ENCODE measurements at regions of chr22 and their contacts with region 1.

Region 1: GRCh38 chr22:22422629-22423112 is 85.9 kb downstream of the ZNF280B start:
- DNase-seq: peak; percentile 58
- H3K4me3 ChIP-seq: no peak overlapping the region
- H3K27ac ChIP-seq: no peak overlapping the region
- H3K4me1 ChIP-seq: no peaks in the 10 kb centered on the region
- H3K27me3 ChIP-seq: peaks cover 8 to 15% of the 10 kb centered on the region in 2 experiments
- CTCF ChIP-seq: peak; percentile 82
- POLR2A ChIP-seq: no peak

Region 2: GRCh38 chr22:22207845-22208564 is 214.7 kb before region 1 on chr22:
- CTCF ChIA-PET with region 1: interaction called, 13 read pairs
- POLR2A ChIA-PET with region 1: no interaction called
- dilution Hi-C with region 1: no loop called
- intact Hi-C with region 1: loop called (anchors 5 kb)
- DNase-seq: peak; percentile 68
- H3K4me3 ChIP-seq: no peak overlapping the region
- H3K27ac ChIP-seq: no peak overlapping the region
- H3K4me1 ChIP-seq: peaks cover 11% of the 10 kb centered on the region
- H3K27me3 ChIP-seq: peaks cover 6 to 22% of the 10 kb centered on the region in 2 experiments
- CTCF ChIP-seq: peak; percentile 79 to 80
- POLR2A ChIP-seq: no peak

Region 3: DNA sequence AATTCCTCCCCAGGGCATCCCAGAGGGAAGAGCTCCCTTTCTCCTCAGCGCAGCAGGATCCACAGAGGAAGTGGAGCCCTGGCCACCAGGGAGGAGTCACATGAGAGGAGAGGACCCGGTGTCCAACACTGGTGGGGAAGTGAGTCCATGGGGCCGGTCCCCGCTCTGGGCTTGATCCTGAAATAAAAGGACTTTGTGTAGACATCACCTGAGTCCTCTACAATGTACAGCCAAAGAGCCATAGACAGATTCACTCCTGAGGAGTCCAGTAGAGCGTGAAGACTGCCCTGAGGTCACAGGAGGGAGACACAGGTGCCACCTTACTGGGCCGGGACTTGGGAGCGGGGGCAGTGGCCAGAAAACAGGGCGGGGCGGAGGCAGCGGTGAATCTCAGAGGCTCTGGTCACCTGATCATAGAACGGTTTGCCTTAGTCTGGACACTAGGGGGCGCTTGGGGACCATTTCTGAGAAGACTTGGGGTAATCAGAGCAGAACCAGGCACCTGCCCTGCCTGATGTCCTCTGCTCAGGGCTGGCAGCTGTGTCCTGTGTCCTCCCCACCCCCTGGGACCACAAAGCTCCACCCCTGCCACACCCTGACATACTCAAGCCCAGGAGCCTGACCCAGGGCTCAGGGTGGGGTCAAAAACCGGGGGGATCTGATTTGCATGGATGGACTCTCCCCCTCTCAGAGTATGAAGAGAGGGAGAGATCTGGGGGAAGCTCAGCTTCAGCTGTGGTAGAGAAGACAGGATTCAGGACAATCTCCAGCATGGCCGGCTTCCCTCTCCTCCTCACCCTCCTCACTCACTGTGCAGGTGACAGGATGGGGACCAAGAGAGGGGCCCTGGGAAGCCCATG is 65.4 kb before region 1 on chr22:
- CTCF ChIA-PET with region 1: no interaction called
- POLR2A ChIA-PET with region 1: no interaction called
- dilution Hi-C with region 1: no loop called
- intact Hi-C with region 1: no loop called
- DNase-seq: peak; percentile 50
- H3K4me3 ChIP-seq: no peak overlapping the region
- H3K27ac ChIP-seq: no peak overlapping the region
- H3K4me1 ChIP-seq: no peaks in the 10 kb centered on the region
- H3K27me3 ChIP-seq: peaks cover 3 to 6% of the 10 kb centered on the region in 2 experiments
- CTCF ChIP-seq: peak; percentile 72 to 87
- POLR2A ChIP-seq: no peak

Region 4: GRCh38 chr22:22408731-22409696 is 13.7 kb before region 1 on chr22:
- CTCF ChIA-PET with region 1: interaction called, 19 read pairs
- POLR2A ChIA-PET with region 1: no interaction called
- dilution Hi-C with region 1: no loop called
- intact Hi-C with region 1: no loop called
- DNase-seq: no peak
- H3K4me3 ChIP-seq: no peak overlapping the region
- H3K27ac ChIP-seq: no peak overlapping the region
- H3K4me1 ChIP-seq: no peaks in the 10 kb centered on the region
- H3K27me3 ChIP-seq: peaks cover 13 to 14% of the 10 kb centered on the region in 2 experiments
- CTCF ChIP-seq: peak in 1 of 2 donors; percentile 55
- POLR2A ChIP-seq: no peak

Region 5: GRCh38 chr22:22440188-22440587 is 17.5 kb after region 1 on chr22:
- CTCF ChIA-PET with region 1: interaction called, 10 read pairs
- POLR2A ChIA-PET with region 1: no interaction called
- dilution Hi-C with region 1: no loop called
- intact Hi-C with region 1: no loop called
- DNase-seq: no peak
- H3K4me3 ChIP-seq: no peak overlapping the region
- H3K27ac ChIP-seq: no peak overlapping the region
- H3K4me1 ChIP-seq: no peaks in the 10 kb centered on the region
- H3K27me3 ChIP-seq: peaks cover 2% of the 10 kb centered on the region in 2 experiments
- CTCF ChIP-seq: no peak
- POLR2A ChIP-seq: no peak

Region 6: DNA sequence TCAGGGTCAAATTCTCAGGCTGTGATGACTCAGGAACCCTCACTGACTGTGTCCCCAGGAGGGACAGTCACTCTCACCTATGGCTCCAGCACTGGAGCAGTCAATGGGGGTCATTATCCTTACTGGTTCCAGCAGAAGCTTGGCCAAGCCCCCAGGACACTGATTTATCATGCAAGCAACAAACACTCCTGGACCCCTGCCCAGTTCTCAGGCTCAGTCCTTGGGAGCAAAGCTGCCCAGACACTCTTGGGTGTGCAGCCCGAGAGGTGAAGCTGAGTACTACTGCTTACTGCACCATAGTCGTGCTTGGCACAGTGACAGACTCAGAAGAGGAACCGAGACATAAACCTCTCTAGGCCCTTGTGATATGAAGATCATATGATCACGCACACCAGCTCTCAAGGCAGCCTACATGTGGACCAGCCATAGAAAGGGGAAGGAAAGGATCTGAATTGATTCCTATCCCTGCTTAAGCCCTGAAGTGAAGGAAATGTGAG is 27.7 kb after region 1 on chr22:
- CTCF ChIA-PET with region 1: interaction called, 12 read pairs
- POLR2A ChIA-PET with region 1: no interaction called
- dilution Hi-C with region 1: no loop called
- intact Hi-C with region 1: no loop called
- DNase-seq: no peak
- H3K4me3 ChIP-seq: no peak overlapping the region
- H3K27ac ChIP-seq: no peak overlapping the region
- H3K4me1 ChIP-seq: no peaks in the 10 kb centered on the region
- H3K27me3 ChIP-seq: peaks cover 12 to 15% of the 10 kb centered on the region in 2 experiments
- CTCF ChIP-seq: no peak
- POLR2A ChIP-seq: no peak

Measured in endothelial cell of umbilical vein (primary cell).